ENCODE measurements at regions of chr1 and their contacts with region 1.

Region 1: DNA sequence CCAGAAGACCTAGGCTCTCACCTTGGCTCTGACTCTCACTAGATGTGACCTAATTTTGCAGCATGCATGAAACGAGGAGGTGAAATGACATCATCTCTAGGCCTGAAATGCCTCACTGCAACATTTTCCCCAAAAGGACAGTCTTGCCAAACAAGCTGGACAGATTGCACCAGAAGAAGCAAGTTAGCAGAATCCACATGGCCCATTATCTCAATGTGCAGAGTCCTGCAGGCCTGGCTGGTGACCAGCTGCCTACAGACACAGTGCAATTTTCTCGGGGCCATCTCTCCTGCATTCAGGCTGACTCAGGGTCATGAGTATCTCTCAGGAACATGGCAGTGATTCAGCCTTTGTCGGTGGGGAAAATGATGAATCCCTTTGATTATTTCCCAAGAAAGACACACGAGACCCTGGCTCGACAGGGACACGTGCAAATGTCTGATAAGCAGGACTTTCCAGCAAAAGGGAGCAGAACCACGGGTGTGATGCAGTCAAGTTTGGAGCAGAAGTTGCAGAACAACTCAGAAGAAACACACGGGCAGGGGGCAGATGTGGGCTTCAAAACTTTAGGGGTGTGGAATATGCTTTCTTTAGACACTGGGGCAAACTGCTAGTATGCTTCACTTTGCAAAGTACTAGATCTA is 38.7 kb downstream of the TRIM67 start:
- DNase-seq: no peak
- ATAC-seq: no peak

Region 2: GRCh38 chr1:230797942-230798418 is 402.5 kb before region 1 on chr1:
- intact Hi-C with region 1: loop called in 1 of 2 experiments (anchors 10 kb)
- DNase-seq: peak; percentile 31 to 37
- ATAC-seq: peak; percentile 83

Measured in left colon (tissue), 2 donors.